Posterior vena cava (tissue), 2 donors: ENCODE measurements at regions of chr2 and their contacts with region 1.

Region 1: DNA sequence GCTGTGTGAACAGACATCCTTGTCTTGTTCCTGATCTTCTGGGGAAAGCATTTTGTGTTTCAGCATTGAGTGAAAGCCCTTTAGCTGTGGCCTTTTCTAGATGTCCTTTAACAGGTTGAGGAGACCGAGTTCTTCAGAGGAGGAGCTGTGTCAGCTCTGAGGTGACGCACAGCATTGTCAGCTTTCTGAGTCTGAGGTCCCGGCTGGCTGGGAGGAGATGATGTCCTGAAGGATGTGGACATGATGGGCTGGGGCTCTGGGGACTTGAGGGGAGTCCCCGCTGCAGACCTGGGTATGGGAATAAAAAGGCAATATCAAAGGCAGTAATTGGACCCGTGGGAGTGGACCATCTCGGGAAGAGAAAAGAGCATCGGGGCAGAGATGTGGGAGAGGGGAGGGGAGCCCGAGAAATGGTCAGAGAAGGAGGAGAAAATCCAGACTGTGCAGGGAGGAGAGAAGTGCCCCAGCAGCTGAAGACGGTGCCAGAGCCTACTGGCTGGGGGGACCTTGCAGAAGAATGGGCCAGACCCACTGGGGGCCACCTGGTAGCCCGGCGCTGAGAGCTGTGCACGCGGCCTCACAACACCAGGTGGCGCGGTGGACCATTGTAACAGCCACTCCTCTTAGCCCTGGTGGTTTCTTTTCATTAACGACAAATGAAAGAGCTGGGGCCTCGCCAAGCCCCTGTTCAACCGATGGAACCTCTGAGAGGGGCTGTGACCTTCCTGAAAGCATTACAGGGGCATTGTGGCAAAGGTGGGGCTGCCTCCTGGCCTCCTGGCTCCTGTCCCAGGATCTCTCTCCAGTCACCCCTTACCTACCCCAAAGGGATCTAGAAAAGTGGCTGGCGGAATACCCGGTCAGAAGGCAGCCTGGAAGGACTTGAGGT is 61.6 kb downstream of the ST3GAL5 start:
- DNase-seq: peak; percentile 92

Region 2: GRCh38 chr2:85873679-85874078 is 46.4 kb after region 1 on chr2:
- intact Hi-C with region 1: loop called in 1 of 2 experiments (anchors 10 kb)
- DNase-seq: no peak

Region 3: GRCh38 chr2:86079981-86080911 is 253.0 kb after region 1 on chr2:
- intact Hi-C with region 1: loop called (anchors 2 to 5 kb)
- DNase-seq: peak; percentile 92